Right ventricle myocardium superior (tissue), 1 donor: ENCODE measurements at regions of chr4 and their contacts with region 1.

Region 1: DNA sequence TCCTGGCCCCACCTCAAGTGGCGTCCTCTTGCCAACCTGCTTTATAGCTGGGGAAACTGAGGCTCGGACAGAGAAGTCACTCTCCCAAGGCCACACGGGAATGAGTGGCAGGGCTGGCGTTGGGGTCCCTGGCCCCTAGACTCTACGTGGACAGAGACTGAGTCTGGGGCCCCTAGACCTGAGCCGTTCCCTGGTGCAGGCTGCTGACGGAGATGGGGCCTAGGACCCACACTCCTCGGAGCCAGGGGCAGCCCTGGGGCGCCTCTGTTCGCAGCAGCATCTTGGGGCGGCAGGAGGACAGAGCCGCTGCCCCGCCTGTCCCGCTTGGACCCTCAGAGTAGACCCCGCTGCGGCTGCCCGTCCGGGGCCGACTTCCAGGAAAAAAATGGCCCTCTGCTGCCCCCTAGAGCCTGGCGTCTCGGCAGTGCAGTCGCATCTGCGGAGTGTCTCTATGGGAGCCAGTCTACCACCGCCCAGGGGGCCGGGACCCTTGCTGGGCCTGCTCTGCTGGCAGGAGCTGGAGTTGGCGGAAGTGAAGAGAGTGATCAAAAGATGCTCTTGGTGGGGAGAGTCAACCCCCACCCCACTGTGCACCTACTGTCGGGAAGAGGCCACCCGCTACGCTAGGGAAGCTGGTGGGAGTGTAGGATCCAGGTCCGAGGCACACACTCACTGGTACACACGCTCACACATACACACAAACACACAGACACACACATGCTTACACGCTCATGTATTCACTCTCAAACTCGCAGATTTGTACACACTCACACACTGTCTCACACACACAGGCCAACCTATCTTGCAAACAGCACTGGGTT is 220.1 kb downstream of the AFAP1 start:
- DNase-seq: peak; percentile 70
- ATAC-seq: peak; percentile 89

Region 2: DNA sequence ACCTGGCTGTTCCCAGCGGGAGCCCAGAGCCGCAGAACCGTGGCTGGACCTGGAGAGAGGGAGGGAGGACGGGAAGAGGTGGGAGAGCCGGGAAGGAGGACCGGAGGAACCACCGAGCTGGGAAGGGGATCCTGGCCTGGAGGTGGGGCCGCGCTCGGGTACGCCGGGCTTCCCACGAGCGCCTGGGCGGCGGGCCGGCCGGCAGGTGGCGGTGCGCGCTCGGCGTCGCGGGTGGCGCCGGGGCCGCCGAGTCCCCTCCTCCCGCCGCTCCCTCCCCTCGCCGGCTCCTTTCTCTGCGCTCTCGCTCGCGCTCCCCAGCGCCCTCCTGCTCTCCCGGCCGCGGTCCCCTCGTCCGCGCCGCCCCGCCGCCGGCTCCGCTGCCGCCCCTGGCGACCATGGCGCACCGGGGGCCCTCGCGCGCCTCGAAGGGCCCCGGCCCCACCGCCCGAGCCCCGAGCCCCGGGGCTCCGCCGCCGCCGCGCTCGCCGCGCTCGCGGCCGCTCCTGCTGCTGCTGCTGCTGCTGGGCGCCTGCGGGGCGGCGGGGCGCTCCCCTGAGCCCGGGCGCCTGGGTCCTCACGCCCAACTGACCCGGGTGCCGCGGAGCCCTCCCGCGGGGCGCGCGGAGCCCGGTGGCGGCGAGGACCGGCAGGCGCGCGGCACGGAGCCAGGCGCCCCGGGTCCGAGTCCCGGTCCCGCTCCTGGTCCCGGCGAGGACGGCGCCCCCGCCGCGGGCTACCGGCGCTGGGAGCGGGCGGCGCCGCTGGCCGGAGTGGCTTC is 527.1 kb before region 1 on chr4 and contains the start of gene SORCS2:
- intact Hi-C with region 1: loop called (anchors 5 kb)
- DNase-seq: peak; percentile 78
- ATAC-seq: peak; percentile 94
- total RNA-seq, gene SORCS2: 1.2 TPM

Region 3: GRCh38 chr4:7462509-7462971 is 257.0 kb before region 1 on chr4:
- intact Hi-C with region 1: loop called (anchors 2 kb)
- DNase-seq: peak; percentile 56
- ATAC-seq: peak; percentile 90

Region 4: DNA sequence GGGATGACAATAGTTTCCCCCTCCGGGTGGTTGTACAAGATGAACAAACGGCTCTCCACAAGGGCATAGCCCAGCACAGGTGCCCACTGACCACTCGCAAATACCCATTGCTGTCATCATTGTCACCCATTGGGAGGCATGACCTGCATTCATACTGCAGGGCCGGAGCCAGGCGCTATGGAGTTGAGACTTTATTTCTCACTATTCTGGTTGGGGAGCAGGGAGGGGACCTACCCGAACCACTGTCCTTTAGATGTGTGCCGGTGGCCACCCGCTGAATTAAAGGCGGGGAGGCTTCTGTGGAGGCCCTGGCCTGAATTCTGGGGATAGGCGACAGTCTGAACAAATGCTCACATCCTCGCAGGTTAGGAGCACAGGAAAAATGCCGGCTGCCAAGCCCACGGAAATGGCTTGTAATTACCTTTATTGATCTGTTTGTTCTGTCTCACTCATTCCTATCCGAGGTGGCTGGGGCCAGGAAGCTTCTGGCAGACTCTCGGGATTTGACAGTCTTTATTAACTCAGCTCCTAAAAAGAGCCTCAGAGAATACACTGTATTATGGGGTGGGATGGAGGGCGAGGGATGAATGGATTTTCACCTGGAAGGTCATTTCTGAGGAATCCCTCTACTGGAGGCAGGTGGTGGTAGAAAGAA is 159.7 kb before region 1 on chr4:
- intact Hi-C with region 1: no loop called
- DNase-seq: no peak
- ATAC-seq: no peak